Aorta (tissue), 5 donors: ENCODE measurements at regions of chr1 and their contacts with region 1.

Region 1: GRCh38 chr1:46442317-46443161 is 47.1 kb upstream of the DMBX1 start:
- DNase-seq: peak; percentile 77 to 92
- ATAC-seq: peak; percentile 85
- H3K4me3 ChIP-seq: no peak overlapping the region
- H3K27ac ChIP-seq: no peak overlapping the region
- H3K4me1 ChIP-seq: no peaks in the 10 kb centered on the region
- H3K27me3 ChIP-seq: no peaks in the 10 kb centered on the region

Region 2: DNA sequence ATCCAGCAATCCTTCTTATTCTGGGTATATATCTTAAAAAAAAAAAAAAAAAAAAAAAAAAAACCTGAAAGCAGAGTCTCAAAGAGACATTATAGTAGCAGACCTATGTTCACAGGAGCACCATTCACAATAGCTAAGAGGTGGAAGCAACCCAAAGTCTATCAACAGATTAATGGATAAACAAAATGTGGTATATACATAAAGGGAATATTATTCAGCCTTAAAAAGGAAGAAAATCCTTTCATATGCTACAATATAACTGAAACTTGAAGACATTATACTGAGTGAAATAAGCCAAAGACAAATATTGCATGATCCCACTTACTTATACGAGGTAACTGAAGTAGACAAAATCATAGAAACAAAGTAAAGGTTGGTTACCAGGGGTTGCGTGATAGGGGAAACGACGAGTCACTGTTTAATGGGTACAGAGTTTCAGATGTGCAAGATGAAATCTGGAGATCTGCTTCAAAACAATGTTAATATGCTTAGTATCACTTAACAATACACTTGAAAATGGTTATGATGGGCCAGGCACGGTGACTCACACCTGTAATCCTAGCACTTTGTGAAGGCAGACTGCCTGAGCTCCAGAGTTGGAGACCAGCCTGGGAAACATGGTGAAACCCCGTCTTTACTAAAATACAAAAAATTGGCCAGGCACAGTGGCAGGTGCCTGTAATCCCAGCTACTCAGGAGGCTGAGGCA is 339.6 kb before region 1 on chr1:
- intact Hi-C with region 1: no loop called
- DNase-seq: no peak
- ATAC-seq: no peak
- H3K4me3 ChIP-seq: no peak overlapping the region
- H3K27ac ChIP-seq: no peak overlapping the region
- H3K4me1 ChIP-seq: no peaks in the 10 kb centered on the region
- H3K27me3 ChIP-seq: no peaks in the 10 kb centered on the region

Region 3: GRCh38 chr1:46724991-46725735 is 282.6 kb after region 1 on chr1:
- intact Hi-C with region 1: loop called (anchors 10 kb)
- DNase-seq: peak; percentile 73 to 80
- ATAC-seq: peak; percentile 94
- H3K4me3 ChIP-seq: no peak overlapping the region
- H3K27ac ChIP-seq: no peak overlapping the region
- H3K4me1 ChIP-seq: no peaks in the 10 kb centered on the region
- H3K27me3 ChIP-seq: no peaks in the 10 kb centered on the region